HCT116 (cell line): ENCODE measurements at regions of chr7 and their contacts with region 1.

Region 1: DNA sequence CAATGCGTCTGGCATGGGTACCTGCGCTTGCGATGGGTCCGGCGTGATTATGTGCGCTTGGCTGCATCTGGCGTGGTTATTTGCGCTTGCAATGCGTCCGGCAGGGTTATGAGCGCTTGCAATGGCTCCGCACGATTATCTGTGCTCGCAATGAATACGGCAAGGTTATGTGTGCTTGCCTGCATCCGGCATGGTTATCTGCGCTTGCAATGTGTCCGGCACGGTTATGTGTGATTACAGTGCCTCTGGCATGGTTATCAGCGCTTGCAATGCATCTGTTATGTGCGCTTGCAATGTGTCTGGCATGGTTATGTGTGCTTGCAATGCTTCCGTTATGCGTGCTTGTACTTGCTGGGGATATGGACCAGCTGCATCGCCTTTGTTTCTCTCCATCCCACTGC is 37.7 kb downstream of the RBAK start:
- DNase-seq: no peak
- ATAC-seq: no peak
- H3K4me3 ChIP-seq: no peak overlapping the region
- H3K27ac ChIP-seq: no peak overlapping the region
- H3K4me1 ChIP-seq: peaks cover 0 to 2% of the 10 kb centered on the region in 2 experiments; a peak in 2 of 4 replicates
- H3K27me3 ChIP-seq: no peaks in the 10 kb centered on the region
- CTCF ChIP-seq: no peak
- POLR2A ChIP-seq: no peak
- RAD21 ChIP-seq: no peak

Region 2: GRCh38 chr7:4791738-4792536 is 291.4 kb before region 1 on chr7:
- CTCF ChIA-PET with region 1: interaction called, 28 read pairs
- POLR2A ChIA-PET with region 1: no interaction called
- RAD21 ChIA-PET with region 1: no interaction called
- intact Hi-C with region 1: loop called (anchors 1 kb)
- DNase-seq: peak; percentile 26
- ATAC-seq: peak; percentile 92
- H3K4me3 ChIP-seq: no peak overlapping the region
- H3K27ac ChIP-seq: no peak overlapping the region; the same call in 1 of the 2 replicates
- H3K4me1 ChIP-seq: peaks cover 2 to 14% of the 10 kb centered on the region in 2 experiments; a peak in 3 of 4 replicates
- H3K27me3 ChIP-seq: no peaks in the 10 kb centered on the region
- CTCF ChIP-seq: peak; percentile 47 to 86 (median 78); a peak in 5 of 6 replicates
- POLR2A ChIP-seq: no peak
- RAD21 ChIP-seq: no peak; the same call in 1 of the 2 replicates

Region 3: DNA sequence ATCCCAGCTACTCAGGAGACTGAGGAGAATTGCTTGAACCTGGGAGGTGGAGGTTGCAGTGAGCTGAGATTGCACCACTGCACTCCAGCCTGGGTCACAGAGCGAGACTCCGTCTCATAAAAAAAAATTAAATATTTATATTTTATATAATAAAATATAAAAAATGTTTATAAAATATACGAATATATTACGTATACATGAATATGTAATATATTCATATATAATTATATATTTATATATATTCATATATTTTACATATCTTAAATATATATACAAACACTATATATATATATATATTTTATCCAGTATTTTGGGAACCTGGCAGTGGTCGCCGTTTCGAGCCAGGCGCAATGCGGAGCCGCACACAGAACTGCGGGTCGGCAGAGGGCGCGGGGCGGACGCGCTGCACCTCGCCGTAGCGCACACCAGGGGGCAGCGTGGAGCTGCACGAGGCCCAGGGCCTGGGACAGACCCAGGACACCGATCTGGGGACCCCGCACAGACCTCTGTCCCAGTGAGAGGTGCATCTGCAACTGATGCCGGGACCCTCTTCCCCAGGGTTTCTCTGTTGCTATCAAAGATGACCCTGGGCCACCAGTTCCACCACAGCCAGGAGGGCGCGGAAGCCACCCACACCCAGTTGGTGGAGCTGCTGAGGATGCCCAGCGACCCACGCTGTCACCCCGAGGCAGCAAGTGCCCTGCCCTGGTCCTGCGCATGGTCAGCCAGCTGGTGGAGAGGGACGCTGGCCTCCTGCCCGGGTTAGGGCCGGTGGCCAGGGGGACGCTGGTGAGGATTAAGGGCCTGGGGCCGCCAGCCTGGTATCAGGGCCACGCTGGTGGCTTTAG is 285.2 kb before region 1 on chr7:
- CTCF ChIA-PET with region 1: interaction called, 28 read pairs
- POLR2A ChIA-PET with region 1: no interaction called
- RAD21 ChIA-PET with region 1: interaction called, 4 read pairs
- intact Hi-C with region 1: loop called (anchors 1 kb)
- DNase-seq: peak; percentile 16
- ATAC-seq: peak; percentile 94
- H3K4me3 ChIP-seq: no peak overlapping the region
- H3K27ac ChIP-seq: no peak overlapping the region
- H3K4me1 ChIP-seq: peaks cover 2 to 10% of the 10 kb centered on the region in 2 experiments; a peak in 2 of 4 replicates
- H3K27me3 ChIP-seq: no peaks in the 10 kb centered on the region
- CTCF ChIP-seq: peak; percentile 66 to 98 (median 80)
- POLR2A ChIP-seq: no peak
- RAD21 ChIP-seq: peak; percentile 85

Region 4: DNA sequence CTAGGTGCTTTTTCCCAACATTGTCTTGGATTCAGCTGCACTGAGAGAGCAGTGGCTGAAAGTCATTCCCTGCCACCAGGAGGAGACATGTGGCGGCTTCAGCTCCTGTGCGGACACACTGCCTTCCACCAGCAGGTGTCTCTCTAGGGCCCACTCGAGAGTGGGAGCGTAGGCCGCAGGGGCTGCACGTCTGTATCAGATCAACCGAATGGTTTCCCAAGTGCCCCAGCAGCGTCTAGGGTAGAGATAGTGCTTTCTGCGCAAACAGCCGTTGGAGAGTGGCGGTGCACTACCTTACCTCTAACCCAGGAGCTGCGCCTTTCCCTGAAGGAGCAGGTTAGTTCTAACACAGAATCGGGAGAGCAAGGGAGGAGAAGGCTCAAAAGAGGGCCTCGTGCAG is 253.1 kb before region 1 on chr7:
- CTCF ChIA-PET with region 1: interaction called, 14 read pairs
- POLR2A ChIA-PET with region 1: no interaction called
- RAD21 ChIA-PET with region 1: interaction called, 3 to 5 read pairs
- intact Hi-C with region 1: loop called (anchors 1 kb)
- DNase-seq: peak; percentile 41
- ATAC-seq: peak; percentile 98
- H3K4me3 ChIP-seq: no peak overlapping the region
- H3K27ac ChIP-seq: no peak overlapping the region
- H3K4me1 ChIP-seq: no peaks in the 10 kb centered on the region
- H3K27me3 ChIP-seq: no peaks in the 10 kb centered on the region
- CTCF ChIP-seq: peak; percentile 93 to 99 (median 97)
- POLR2A ChIP-seq: no peak
- RAD21 ChIP-seq: peak; percentile 78

Region 5: DNA sequence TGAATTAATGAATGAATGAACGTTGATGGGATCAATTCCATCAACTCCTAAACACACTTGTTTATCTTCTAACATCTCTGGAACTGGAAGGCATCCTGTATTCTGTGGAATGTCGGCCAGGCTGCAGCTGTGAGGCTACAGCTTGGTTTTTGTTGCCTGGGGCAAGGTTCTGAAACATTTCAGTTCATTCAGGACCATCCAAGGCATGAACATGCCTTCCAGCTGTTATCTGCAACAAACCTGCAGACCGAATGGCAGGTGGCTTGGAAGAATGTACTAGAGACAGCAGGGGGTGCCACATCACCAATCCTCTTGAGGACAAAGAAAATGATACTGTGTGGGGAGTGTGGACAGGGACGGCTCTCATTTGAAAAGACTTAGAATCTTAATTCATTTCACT is 233.9 kb before region 1 on chr7:
- CTCF ChIA-PET with region 1: interaction called, 4 read pairs
- POLR2A ChIA-PET with region 1: no interaction called
- RAD21 ChIA-PET with region 1: no interaction called
- intact Hi-C with region 1: loop called (anchors 1 kb)
- DNase-seq: peak; percentile 12
- ATAC-seq: peak; percentile 63; the same call in 1 of the 2 replicates
- H3K4me3 ChIP-seq: no peak overlapping the region
- H3K27ac ChIP-seq: no peak overlapping the region
- H3K4me1 ChIP-seq: peaks cover 6 to 19% of the 10 kb centered on the region in 2 experiments; a peak in 3 of 4 replicates
- H3K27me3 ChIP-seq: no peaks in the 10 kb centered on the region
- CTCF ChIP-seq: peak; percentile 30 to 58 (median 39); a peak in 4 of 6 replicates
- POLR2A ChIP-seq: no peak
- RAD21 ChIP-seq: peak; percentile 71

Region 6: DNA sequence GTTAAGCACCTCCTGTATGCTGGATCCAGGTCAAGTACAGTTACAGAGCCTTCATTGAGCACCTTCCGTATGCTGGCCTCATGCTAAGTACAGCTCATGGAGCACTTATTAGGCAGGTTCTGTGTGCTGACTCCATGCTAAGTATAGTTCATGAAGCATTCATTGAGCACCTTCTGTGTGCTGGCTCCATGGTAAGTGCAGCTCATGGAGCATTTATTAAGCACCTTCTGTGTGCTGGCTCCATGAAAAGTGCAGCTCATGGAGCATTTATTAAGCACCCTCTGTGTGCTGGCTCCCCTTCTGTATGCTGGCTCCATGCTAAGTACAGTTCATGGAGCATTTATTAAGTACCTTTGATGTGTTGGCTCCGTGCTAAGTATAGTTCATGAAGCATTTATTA is 154.9 kb before region 1 on chr7:
- CTCF ChIA-PET with region 1: no interaction called
- POLR2A ChIA-PET with region 1: no interaction called
- RAD21 ChIA-PET with region 1: no interaction called
- intact Hi-C with region 1: no loop called
- DNase-seq: no peak
- ATAC-seq: no peak
- H3K4me3 ChIP-seq: no peak overlapping the region
- H3K27ac ChIP-seq: no peak overlapping the region
- H3K4me1 ChIP-seq: peaks cover 0 to 6% of the 10 kb centered on the region in 2 experiments; a peak in 3 of 4 replicates
- H3K27me3 ChIP-seq: no peaks in the 10 kb centered on the region
- CTCF ChIP-seq: no peak
- POLR2A ChIP-seq: no peak
- RAD21 ChIP-seq: no peak

Region 7: DNA sequence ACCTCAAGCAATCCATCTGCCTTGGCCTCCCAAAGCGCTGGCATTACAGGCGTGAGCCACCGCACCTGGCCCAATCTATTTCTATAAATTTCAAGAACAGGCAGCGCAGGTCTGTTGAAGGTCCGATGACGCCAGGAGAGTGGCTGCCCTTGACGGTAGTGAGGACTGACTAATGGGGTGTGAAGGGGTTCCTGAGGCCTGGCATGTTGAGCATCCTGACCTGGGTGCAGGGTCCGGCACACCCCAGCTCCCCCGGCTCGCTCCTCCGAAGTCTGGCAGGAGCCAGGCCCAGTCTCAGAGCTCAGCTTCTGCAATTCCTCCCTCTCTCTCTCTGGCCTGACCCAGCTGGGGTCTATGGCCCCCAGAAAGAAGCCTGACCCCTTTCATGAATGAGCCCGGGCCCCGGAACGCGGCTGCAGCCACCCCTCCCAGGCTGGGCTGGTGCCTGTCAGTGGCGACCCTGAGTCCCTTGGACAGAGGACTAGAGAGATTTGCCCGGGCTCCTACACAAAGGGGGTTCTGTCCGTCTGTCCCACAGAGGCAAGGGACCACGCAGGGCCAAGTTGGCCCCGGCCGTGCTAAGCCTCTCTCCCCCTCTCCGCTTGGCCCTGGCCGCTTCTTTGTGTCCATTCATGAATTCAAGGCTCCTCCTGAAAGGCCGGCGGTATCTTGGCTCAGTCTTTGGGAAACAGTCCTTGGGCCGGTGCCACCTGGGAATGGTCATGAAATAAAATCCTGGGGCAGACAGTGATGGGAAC is 143.2 kb before region 1 on chr7:
- CTCF ChIA-PET with region 1: no interaction called
- POLR2A ChIA-PET with region 1: no interaction called
- RAD21 ChIA-PET with region 1: no interaction called
- intact Hi-C with region 1: no loop called
- DNase-seq: no peak
- ATAC-seq: no peak
- H3K4me3 ChIP-seq: no peak overlapping the region
- H3K27ac ChIP-seq: no peak overlapping the region
- H3K4me1 ChIP-seq: no peaks in the 10 kb centered on the region
- H3K27me3 ChIP-seq: no peaks in the 10 kb centered on the region
- CTCF ChIP-seq: no peak
- POLR2A ChIP-seq: no peak
- RAD21 ChIP-seq: no peak

Region 8: DNA sequence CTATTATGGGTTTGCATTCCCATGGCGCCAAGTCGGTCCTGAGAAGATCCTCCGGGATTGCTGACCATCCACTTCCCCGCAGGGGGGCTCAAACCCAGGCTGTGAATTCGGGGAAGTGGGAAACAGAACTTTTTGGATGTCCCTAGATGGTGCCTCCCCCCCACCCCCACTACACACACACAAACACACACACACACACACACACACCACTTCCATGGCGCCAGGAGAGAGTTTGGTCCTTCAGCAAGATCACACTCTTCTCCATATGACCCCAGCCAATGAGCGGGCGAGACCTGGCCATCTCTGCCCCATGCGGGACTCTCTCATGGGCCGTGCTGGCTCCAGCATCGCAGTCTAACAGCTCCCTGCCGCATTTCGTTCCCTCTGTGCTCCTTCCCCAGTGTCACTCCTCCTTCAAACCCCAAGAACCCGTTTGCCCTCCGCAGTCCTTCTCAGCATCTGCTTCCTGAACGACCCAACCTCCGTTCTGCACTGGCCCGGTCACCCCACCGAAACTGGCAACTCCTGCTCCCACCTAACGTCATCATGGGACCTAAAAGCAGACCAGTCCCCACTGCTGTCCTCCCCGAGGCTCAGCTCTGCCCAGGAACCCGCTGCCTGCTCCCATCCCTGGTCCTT is 372.4 kb after region 1 on chr7:
- CTCF ChIA-PET with region 1: no interaction called
- POLR2A ChIA-PET with region 1: no interaction called
- RAD21 ChIA-PET with region 1: no interaction called
- intact Hi-C with region 1: no loop called
- DNase-seq: no peak
- ATAC-seq: no peak
- H3K4me3 ChIP-seq: no peak overlapping the region
- H3K27ac ChIP-seq: no peak overlapping the region
- H3K4me1 ChIP-seq: no peaks in the 10 kb centered on the region
- H3K27me3 ChIP-seq: no peaks in the 10 kb centered on the region
- CTCF ChIP-seq: no peak
- POLR2A ChIP-seq: no peak
- RAD21 ChIP-seq: no peak